Cardiac septum (tissue), 1 donor: ENCODE measurements at regions of chr9 and their contacts with region 1.

Region 1: GRCh38 chr9:104907278-104907951 is 20.5 kb downstream of the ABCA1 start:
- DNase-seq: no peak

Region 2: DNA sequence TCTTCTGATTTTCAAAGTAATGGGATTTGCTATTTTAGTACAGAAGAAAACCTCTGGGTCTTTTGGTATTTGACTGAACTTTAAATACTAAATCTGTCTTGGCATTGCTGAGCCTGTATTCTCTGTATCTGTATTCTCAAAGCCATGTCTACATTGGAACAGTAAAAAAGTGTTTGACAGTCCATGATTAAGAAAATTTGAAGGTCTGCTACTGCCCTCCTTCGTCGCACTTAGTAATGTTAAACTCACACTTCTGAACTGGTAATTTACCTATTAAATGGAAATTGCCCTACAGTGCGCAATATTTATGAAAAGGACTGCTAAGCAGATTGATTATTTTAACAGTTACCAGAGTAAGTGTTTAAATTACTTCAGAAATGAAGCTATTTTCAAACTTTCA is 979.0 kb before region 1 on chr9:
- intact Hi-C with region 1: no loop called
- DNase-seq: no peak

Region 3: GRCh38 chr9:104868687-104869404 is 38.6 kb before region 1 on chr9:
- intact Hi-C with region 1: loop called (anchors 5 kb)
- DNase-seq: no peak

Region 4: GRCh38 chr9:104885818-104886709 is 21.4 kb before region 1 on chr9:
- intact Hi-C with region 1: loop called (anchors 2 kb)
- DNase-seq: no peak